ENCODE measurements at regions of chr3 and their contacts with region 1.

Region 1: DNA sequence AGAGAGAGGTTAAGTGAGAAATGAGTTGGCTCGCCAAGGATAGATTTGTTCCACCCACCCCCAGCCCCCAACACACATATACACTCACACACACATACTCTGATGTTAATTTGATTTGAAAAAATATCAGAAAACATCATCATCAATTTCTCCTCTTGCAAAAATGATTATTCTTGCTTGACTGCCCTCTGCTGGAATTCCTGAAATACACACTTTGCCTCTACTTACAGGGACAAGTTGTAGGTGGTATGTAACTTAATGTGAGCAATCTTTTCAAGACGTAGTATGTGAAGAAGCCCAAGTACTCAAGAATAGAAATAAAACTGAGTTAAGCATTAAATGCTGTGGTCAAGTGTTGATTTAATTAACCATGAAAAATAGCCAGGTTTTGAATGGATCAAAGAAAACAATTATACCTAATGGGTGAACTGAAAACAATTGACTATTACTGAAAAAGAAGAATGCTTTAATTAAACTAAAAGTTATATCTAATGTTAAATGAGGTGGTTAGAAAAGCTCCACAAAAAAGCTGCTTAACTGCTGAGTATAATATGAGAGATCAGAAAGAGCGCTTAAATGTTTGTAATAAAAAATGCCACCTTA is 46.6 kb upstream of the MDFIC2 start:
- DNase-seq: peak; percentile 40
- ATAC-seq: peak; percentile 48; the same call in 1 of the 2 replicates
- H3K4me3 ChIP-seq: no peak overlapping the region
- H3K27ac ChIP-seq: no peak overlapping the region
- H3K4me1 ChIP-seq: no peaks in the 10 kb centered on the region
- H3K27me3 ChIP-seq: no peaks in the 10 kb centered on the region
- CTCF ChIP-seq: peak; percentile 63
- POLR2A ChIP-seq: no peak
- RAD21 ChIP-seq: peak; percentile 50

Region 2: DNA sequence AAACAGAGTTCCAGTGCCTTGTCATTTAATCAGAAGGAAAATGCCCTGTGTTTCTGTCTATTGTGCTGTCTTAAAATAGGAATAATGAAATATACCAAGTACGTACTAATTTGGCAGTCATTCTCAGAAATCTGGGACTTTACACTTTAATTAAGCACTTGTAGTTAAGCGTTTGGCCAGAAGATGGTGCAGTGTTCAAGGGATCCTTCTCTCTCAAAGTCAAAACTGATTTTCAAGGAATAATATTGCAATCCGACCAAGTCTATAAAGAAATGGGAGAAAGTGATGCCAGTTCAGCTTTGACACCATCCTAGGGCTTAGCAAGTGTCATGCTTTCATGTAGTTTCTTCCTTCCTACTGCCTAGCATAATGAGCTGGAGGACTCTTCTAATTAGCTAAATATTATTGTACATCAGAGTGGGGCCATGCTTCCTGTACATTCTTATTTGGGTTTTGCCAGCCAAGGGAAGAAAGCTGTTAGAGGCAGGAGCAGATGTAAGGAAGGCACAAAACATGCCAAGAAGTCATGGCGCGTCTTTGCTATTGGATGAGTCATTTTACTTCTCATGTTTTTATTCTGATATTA is 294.8 kb before region 1 on chr3:
- CTCF ChIA-PET with region 1: interaction called, 3 read pairs
- POLR2A ChIA-PET with region 1: no interaction called
- dilution Hi-C with region 1: no loop called
- in situ Hi-C with region 1: no loop called
- intact Hi-C with region 1: loop called (anchors 1 kb)
- DNase-seq: peak; percentile 38
- ATAC-seq: peak; percentile 77
- H3K4me3 ChIP-seq: no peak overlapping the region
- H3K27ac ChIP-seq: no peak overlapping the region
- H3K4me1 ChIP-seq: no peaks in the 10 kb centered on the region
- H3K27me3 ChIP-seq: peaks cover 29% of the 10 kb centered on the region
- CTCF ChIP-seq: peak; percentile 64
- POLR2A ChIP-seq: no peak
- RAD21 ChIP-seq: peak; percentile 70

Region 3: DNA sequence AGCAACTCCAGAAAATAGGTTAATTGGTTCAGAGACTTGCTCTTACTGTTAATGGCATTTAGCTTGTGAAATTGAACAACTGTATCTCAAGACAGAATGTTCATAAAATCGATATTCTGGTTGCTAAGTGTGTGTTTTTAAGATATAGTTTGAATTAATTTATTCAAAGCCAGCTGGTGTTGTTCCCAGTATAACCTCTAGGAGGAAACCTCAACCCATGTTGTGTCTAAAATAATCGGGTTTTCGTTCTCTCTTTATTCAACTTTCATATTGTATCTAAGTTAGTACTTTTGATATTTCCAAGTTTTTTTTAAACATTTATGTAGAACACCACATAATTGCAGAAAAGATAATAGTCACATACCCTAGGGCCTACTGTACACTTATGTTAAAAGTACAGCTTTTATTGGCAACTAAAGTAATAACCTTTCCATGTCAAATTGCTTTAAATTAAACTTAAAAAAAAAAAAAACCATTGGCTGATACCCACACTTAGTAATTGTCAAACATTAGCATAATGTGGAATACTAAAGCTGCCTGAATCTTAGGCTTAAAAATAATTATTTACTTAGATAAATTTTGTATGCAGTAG is 268.7 kb before region 1 on chr3:
- CTCF ChIA-PET with region 1: interaction called, 8 read pairs
- POLR2A ChIA-PET with region 1: no interaction called
- dilution Hi-C with region 1: no loop called
- in situ Hi-C with region 1: no loop called
- intact Hi-C with region 1: loop called (anchors 1 kb)
- DNase-seq: peak; percentile 28
- ATAC-seq: peak; percentile 76
- H3K4me3 ChIP-seq: no peak overlapping the region
- H3K27ac ChIP-seq: no peak overlapping the region
- H3K4me1 ChIP-seq: no peaks in the 10 kb centered on the region
- H3K27me3 ChIP-seq: no peaks in the 10 kb centered on the region
- CTCF ChIP-seq: peak; percentile 70
- POLR2A ChIP-seq: no peak
- RAD21 ChIP-seq: peak; percentile 56

Region 4: GRCh38 chr3:70120357-70121121 is 238.5 kb before region 1 on chr3:
- CTCF ChIA-PET with region 1: interaction called, 7 read pairs
- POLR2A ChIA-PET with region 1: no interaction called
- dilution Hi-C with region 1: no loop called
- in situ Hi-C with region 1: no loop called
- intact Hi-C with region 1: loop called (anchors 1 kb)
- DNase-seq: peak; percentile 52
- ATAC-seq: no peak
- H3K4me3 ChIP-seq: no peak overlapping the region
- H3K27ac ChIP-seq: no peak overlapping the region
- H3K4me1 ChIP-seq: no peaks in the 10 kb centered on the region
- H3K27me3 ChIP-seq: no peaks in the 10 kb centered on the region
- CTCF ChIP-seq: peak; percentile 54
- POLR2A ChIP-seq: no peak
- RAD21 ChIP-seq: peak; percentile 54